PC-9 (cell line): ENCODE measurements at regions of chr10 and their contacts with region 1.

Region 1: GRCh38 chr10:84456126-84456525 is 127.7 kb downstream of the CCSER2 start:
- DNase-seq: peak in 1 of 2 experiments; percentile 10
- H3K4me3 ChIP-seq: no peak overlapping the region
- H3K27ac ChIP-seq: no peak overlapping the region
- H3K4me1 ChIP-seq: peaks cover 7% of the 10 kb centered on the region
- H3K27me3 ChIP-seq: no peaks in the 10 kb centered on the region
- CTCF ChIP-seq: no peak

Region 2: DNA sequence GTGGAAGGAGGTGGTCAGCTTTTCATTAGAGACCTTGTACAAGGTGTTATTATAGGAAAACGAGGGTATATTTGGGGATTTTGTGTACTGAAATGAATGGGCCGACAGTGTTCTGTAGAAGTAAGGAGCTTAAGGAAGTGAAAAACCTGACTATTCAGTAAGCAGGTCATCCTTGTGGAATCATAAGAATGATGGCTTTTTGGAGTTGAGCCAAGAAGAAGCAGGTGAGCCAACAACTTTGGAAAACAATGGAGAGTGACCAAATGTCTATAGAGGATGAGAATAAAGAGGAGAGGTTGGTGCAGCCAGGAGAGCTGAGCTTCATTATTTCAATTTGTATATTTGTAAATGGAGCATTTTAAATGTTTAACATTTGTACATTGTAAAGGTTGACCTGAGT is 468.0 kb after region 1 on chr10:
- CTCF ChIA-PET with region 1: interaction called, 12 read pairs
- POLR2A ChIA-PET with region 1: no interaction called
- intact Hi-C with region 1: no loop called
- DNase-seq: no peak
- H3K4me3 ChIP-seq: no peak overlapping the region
- H3K27ac ChIP-seq: no peak overlapping the region
- H3K4me1 ChIP-seq: no peaks in the 10 kb centered on the region
- H3K27me3 ChIP-seq: no peaks in the 10 kb centered on the region
- CTCF ChIP-seq: no peak